Psoas muscle (tissue), 8 donors: ENCODE measurements at regions of chr3 and their contacts with region 1.

Region 1: DNA sequence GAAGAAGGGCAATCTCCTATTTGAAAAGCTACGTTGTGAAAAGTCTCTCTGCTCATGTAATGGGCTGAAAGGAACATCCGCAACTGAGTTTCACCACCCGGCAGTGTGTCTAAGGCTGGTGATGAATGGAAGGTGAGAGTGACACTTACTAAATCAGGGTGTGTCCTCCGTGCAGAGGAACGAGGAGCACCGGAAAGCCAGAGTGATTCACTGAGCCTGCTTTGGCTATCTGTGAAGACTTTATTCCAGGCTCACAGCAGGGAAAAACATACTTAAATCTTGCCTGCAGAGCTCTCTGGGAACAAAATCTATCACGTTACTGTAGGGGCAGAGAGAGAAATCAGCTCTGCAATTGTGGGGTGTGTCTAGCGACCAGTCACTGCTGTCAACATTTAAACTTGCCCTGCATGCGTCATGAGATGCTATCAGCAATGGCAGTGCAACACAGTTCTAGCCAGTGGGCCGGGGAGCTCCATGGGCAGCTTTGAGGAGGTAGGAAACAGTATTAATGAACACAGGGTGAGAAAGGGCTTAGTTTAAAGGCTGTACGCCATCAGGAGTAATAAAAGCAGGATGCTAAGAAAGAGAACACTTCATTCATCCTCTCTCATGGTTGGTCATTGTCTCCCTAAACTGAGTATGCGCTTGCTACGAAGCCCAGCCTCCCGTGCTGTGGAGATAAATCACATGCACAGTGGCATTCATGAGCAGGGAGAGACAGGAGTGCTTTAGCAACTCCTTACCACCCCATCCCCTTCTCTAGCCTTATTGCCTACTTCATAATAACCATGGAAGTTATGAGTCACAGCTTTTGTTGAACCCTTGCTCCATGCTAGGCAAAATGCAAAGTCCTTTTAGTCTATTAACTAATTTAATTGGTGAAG is 542.7 kb upstream of the ADAMTS9 start:
- DNase-seq: no peak
- ATAC-seq: no peak
- H3K4me3 ChIP-seq: no peak overlapping the region
- H3K27ac ChIP-seq: no peak overlapping the region
- H3K4me1 ChIP-seq: no peaks in the 10 kb centered on the region
- H3K27me3 ChIP-seq: no peaks in the 10 kb centered on the region
- CTCF ChIP-seq: no peak

Region 2: DNA sequence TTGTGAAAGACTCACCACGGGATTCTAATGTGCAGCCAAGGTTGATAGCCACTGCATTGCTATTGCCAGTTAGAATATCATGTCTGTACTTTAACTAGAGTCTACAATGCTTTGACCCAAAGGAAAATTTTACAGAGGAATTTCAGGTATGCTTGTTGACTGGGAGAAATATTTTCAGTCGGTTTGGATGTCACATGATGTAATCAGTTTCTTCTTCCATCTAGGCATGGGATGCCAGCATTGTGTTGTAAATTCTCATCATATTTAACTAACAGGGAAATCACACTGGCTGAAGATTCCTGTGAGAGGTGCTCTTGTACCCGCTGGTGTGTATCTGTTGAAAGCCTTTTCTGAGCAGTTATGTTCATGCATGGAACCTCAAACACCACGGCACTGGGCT is 33.8 kb before region 1 on chr3:
- intact Hi-C with region 1: loop called in 1 of 2 experiments (anchors 5 kb)
- DNase-seq: no peak
- ATAC-seq: no peak
- H3K4me3 ChIP-seq: no peak overlapping the region
- H3K27ac ChIP-seq: no peak overlapping the region
- H3K4me1 ChIP-seq: no peaks in the 10 kb centered on the region
- H3K27me3 ChIP-seq: no peaks in the 10 kb centered on the region
- CTCF ChIP-seq: no peak